Heart right ventricle (tissue), 16 donors: ENCODE measurements at regions of chr4 and their contacts with region 1.

Region 1: GRCh38 chr4:54971474-54971950 is 153.9 kb downstream of the KDR start:
- DNase-seq: no peak
- ATAC-seq: peak in 7 of 8 donors; percentile 63 to 83 (median 74)
- H3K4me3 ChIP-seq: no peak overlapping the region
- H3K27ac ChIP-seq: no peak overlapping the region
- H3K4me1 ChIP-seq: no peaks in the 10 kb centered on the region
- H3K27me3 ChIP-seq: peaks cover 0 to 8% (median 0%) of the 10 kb centered on the region in 7 donors
- CTCF ChIP-seq: peak; percentile 50 to 87 (median 70)

Region 2: DNA sequence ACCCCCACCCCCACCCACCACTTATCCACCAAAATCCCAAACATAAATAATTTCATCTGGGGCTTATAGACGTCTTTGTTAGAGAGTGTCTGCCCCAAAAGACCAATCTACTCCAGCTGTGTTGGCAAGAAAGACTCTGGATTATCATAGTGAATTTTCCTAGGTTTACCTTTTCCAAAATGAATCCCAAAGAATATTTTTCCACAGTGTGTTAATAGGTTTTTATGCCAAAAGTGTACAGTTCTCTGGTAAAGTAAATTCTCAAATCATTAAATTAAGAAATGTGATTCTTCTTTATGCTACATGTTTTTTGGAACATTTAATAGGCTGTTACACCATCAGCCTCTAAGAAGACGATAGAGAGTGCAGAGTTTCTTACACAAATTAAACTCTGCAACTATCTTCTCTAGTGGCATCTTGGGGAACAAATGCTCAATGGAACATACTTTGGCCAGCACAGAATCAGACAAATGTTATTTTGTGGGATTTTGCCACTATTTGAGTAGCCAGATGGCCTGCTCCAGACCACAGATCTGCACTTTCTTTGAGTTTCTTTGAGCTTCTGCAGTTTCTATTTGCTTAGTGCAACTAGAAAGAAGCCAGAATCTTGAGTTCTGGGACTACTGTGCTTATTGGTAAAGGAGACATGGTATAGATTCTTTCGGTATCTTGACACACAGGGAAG is 107.8 kb before region 1 on chr4:
- intact Hi-C with region 1: no loop called
- DNase-seq: no peak
- ATAC-seq: no peak
- H3K4me3 ChIP-seq: no peak overlapping the region
- H3K27ac ChIP-seq: no peak overlapping the region
- H3K4me1 ChIP-seq: peaks cover 0 to 5% (median 0%) of the 10 kb centered on the region in 9 donors
- H3K27me3 ChIP-seq: no peaks in the 10 kb centered on the region
- CTCF ChIP-seq: no peak

Region 3: GRCh38 chr4:54913751-54914526 is 57.6 kb before region 1 on chr4:
- intact Hi-C with region 1: no loop called
- DNase-seq: peak in 1 of 2 donors; percentile 25
- ATAC-seq: peak; percentile 50 to 85 (median 64)
- H3K4me3 ChIP-seq: no peak overlapping the region
- H3K27ac ChIP-seq: peak overlapping the region in 7 of 10 donors; percentile 11 to 71 (median 38)
- H3K4me1 ChIP-seq: peaks cover 0 to 36% (median 21%) of the 10 kb centered on the region in 9 donors
- H3K27me3 ChIP-seq: no peaks in the 10 kb centered on the region
- CTCF ChIP-seq: no peak

Region 4: GRCh38 chr4:55018521-55018920 is 47.0 kb after region 1 on chr4:
- intact Hi-C with region 1: no loop called
- DNase-seq: no peak
- ATAC-seq: no peak
- H3K4me3 ChIP-seq: no peak overlapping the region
- H3K27ac ChIP-seq: no peak overlapping the region
- H3K4me1 ChIP-seq: no peaks in the 10 kb centered on the region
- H3K27me3 ChIP-seq: no peaks in the 10 kb centered on the region
- CTCF ChIP-seq: no peak

Region 5: DNA sequence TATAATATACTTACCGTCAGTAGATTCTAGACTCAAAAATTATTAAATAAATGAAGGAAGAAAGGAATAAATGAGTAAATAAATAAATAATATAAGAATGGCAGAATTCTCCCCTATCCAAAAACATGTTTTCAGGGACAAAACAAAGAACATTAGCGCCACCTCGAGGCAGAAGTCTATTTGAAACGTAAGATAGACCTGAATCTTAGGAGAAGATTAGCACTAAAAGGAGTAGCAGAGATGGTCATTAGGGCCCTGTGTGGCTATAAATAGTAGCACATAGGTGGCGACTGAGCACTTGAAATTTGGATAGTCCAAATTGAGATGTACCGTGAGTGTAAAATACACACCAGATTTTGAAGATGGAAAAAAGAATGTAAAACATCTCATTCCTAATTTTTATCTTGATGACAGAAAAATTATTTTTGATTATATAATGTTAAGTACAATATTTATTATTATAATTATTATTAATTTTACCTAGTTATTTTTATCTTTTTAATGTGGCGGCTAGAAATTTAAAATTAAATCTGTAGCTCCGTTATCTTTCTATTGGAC is 350.3 kb after region 1 on chr4:
- intact Hi-C with region 1: loop called in 8 of 10 experiments (anchors 1 to 10 kb)
- DNase-seq: peak in 1 of 2 donors; percentile 88
- ATAC-seq: peak in 6 of 8 donors; percentile 17 to 69 (median 52)
- H3K4me3 ChIP-seq: no peak overlapping the region
- H3K27ac ChIP-seq: no peak overlapping the region
- H3K4me1 ChIP-seq: peaks cover 0 to 27% (median 13%) of the 10 kb centered on the region in 9 donors
- H3K27me3 ChIP-seq: no peaks in the 10 kb centered on the region
- CTCF ChIP-seq: peak; percentile 44 to 84 (median 68)

Region 6: GRCh38 chr4:55554453-55555030 is 583.0 kb after region 1 on chr4:
- intact Hi-C with region 1: loop called in 1 of 10 experiments (anchors 10 kb)
- DNase-seq: no peak
- ATAC-seq: peak in 2 of 8 donors; percentile 39 to 48
- H3K4me3 ChIP-seq: no peak overlapping the region
- H3K27ac ChIP-seq: no peak overlapping the region
- H3K4me1 ChIP-seq: peaks cover 0 to 4% (median 0%) of the 10 kb centered on the region in 9 donors
- H3K27me3 ChIP-seq: peaks cover 0 to 3% (median 0%) of the 10 kb centered on the region in 7 donors
- CTCF ChIP-seq: peak; percentile 10 to 66 (median 51)

Region 7: GRCh38 chr4:55736605-55737183 is 765.2 kb after region 1 on chr4:
- intact Hi-C with region 1: loop called in 1 of 10 experiments (anchors 10 kb)
- DNase-seq: no peak
- ATAC-seq: no peak
- H3K4me3 ChIP-seq: no peak overlapping the region
- H3K27ac ChIP-seq: no peak overlapping the region
- H3K4me1 ChIP-seq: no peaks in the 10 kb centered on the region
- H3K27me3 ChIP-seq: peaks cover 0 to 30% (median 10%) of the 10 kb centered on the region in 7 donors
- CTCF ChIP-seq: peak in 7 of 9 donors; percentile 28 to 52 (median 45)